CD4-positive, alpha-beta memory T cell (primary cell): ENCODE measurements at regions of chr16 and their contacts with region 1.

Region 1: DNA sequence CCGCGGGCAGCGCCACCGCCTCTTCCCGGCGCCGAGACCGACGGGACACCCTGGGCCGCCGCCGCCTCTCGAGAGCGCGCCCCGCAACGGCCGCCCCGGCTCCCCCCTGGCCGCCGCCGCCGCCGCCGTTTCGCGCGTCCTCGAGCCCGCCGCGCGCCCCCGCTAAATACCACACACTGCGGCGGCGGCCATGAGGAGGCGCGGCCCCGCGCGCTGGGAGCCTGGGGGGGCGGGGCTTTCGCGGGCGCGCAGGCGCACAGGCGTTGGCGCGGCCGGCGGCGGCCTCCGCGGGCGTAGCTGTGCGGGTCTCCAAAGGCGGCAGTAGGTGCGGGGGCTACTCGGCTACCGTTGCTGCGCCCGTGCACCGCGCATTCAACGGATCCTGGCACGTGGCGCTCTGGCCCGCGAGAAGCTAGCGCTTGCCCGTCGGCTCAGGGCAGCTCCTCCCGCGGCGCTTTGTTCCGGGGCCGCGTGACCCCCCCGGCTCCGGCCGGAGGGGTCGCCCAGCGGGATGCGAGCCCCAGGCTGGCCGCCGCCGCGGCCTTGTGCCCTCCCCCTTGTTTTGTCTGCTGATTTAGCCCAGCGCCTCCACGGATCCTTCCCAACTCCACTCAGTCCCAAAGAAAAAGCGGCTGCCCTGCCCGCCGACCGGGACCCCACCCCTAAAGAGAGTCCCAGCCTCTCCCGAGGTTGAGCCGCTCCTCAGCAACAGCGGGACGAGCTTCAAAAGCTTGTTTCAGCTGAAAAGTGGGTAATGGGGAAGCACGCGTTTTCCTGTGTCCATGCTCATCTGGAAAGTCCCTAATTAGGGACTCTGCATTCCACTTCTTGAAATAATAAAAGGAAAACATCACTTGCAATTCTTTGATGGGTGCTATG is at the start of gene SIAH1:
- DNase-seq: peak; percentile 76 to 91 (median 88)
- H3K4me3 ChIP-seq: peak within 1 kb of the TSS; percentile 63 to 81
- H3K4me3 Mint-ChIP-seq: peak within 1 kb of the TSS; percentile 89 to 97 (median 94)
- H3K27ac ChIP-seq: peak within 1 kb of the TSS; percentile 65
- H3K27ac Mint-ChIP-seq: peak within 1 kb of the TSS; percentile 90 to 97 (median 94)
- H3K4me1 ChIP-seq: peaks cover 29% of the 10 kb centered on the region
- H3K4me1 Mint-ChIP-seq: peaks cover 17 to 29% (median 20%) of the 10 kb centered on the region in 4 donors
- H3K27me3 ChIP-seq: no peaks in the 10 kb centered on the region
- H3K27me3 Mint-ChIP-seq: no peaks in the 10 kb centered on the region
- total RNA-seq, gene SIAH1: 11.9 to 14.9 TPM

Region 2: GRCh38 chr16:46830902-46831647 is 1554.4 kb before region 1 on chr16 and contains the start of gene C16orf87:
- CTCF ChIA-PET with region 1: no interaction called
- POLR2A ChIA-PET with region 1: no interaction called
- intact Hi-C with region 1: loop called (anchors 2 kb)
- DNase-seq: peak; percentile 92 to 95 (median 93)
- H3K4me3 ChIP-seq: peak within 1 kb of the TSS; percentile 74 to 84
- H3K4me3 Mint-ChIP-seq: peak within 1 kb of the TSS; percentile 92 to 100 (median 94)
- H3K27ac ChIP-seq: peak within 1 kb of the TSS; percentile 71
- H3K27ac Mint-ChIP-seq: peak within 1 kb of the TSS; percentile 89 to 99 (median 97)
- H3K4me1 ChIP-seq: peaks cover 41% of the 10 kb centered on the region
- H3K4me1 Mint-ChIP-seq: peaks cover 18 to 37% (median 25%) of the 10 kb centered on the region in 4 donors
- H3K27me3 ChIP-seq: no peaks in the 10 kb centered on the region
- H3K27me3 Mint-ChIP-seq: no peaks in the 10 kb centered on the region
- total RNA-seq, gene C16orf87: 5.8 to 6.2 TPM

Region 3: GRCh38 chr16:47460711-47461597 is 924.6 kb before region 1 on chr16 and contains the starts of genes ITFG1 and PHKB:
- CTCF ChIA-PET with region 1: no interaction called
- POLR2A ChIA-PET with region 1: no interaction called
- intact Hi-C with region 1: loop called (anchors 10 kb)
- DNase-seq: peak; percentile 95 to 98 (median 97)
- H3K4me3 ChIP-seq: peak within 1 kb of the TSS; percentile 74 to 92
- H3K4me3 Mint-ChIP-seq: peak within 1 kb of the TSS; percentile 92 to 99 (median 96)
- H3K27ac ChIP-seq: peak within 1 kb of the TSS; percentile 82
- H3K27ac Mint-ChIP-seq: peak within 1 kb of the TSS; percentile 87 to 99 (median 97)
- H3K4me1 ChIP-seq: peaks cover 56% of the 10 kb centered on the region
- H3K4me1 Mint-ChIP-seq: peaks cover 35 to 72% (median 60%) of the 10 kb centered on the region in 4 donors
- H3K27me3 ChIP-seq: no peaks in the 10 kb centered on the region
- H3K27me3 Mint-ChIP-seq: no peaks in the 10 kb centered on the region
- total RNA-seq, gene ITFG1: 26.1 to 27.7 TPM
- total RNA-seq, gene PHKB: 50.8 to 56.4 TPM

Region 4: GRCh38 chr16:48244080-48244862 is 141.2 kb before region 1 on chr16 and contains the start of gene LONP2:
- CTCF ChIA-PET with region 1: no interaction called
- POLR2A ChIA-PET with region 1: no interaction called
- intact Hi-C with region 1: loop called (anchors 1 kb)
- DNase-seq: peak; percentile 91 to 93 (median 92)
- H3K4me3 ChIP-seq: peak within 1 kb of the TSS; percentile 91 to 94
- H3K4me3 Mint-ChIP-seq: peak within 1 kb of the TSS; percentile 88 to 98 (median 94)
- H3K27ac ChIP-seq: peak within 1 kb of the TSS; percentile 70
- H3K27ac Mint-ChIP-seq: peak within 1 kb of the TSS; percentile 86 to 98 (median 95)
- H3K4me1 ChIP-seq: peaks cover 45% of the 10 kb centered on the region
- H3K4me1 Mint-ChIP-seq: peaks cover 28 to 52% (median 43%) of the 10 kb centered on the region in 4 donors
- H3K27me3 ChIP-seq: no peaks in the 10 kb centered on the region
- H3K27me3 Mint-ChIP-seq: no peaks in the 10 kb centered on the region
- total RNA-seq, gene LONP2: 96.2 to 101 TPM

Region 5: DNA sequence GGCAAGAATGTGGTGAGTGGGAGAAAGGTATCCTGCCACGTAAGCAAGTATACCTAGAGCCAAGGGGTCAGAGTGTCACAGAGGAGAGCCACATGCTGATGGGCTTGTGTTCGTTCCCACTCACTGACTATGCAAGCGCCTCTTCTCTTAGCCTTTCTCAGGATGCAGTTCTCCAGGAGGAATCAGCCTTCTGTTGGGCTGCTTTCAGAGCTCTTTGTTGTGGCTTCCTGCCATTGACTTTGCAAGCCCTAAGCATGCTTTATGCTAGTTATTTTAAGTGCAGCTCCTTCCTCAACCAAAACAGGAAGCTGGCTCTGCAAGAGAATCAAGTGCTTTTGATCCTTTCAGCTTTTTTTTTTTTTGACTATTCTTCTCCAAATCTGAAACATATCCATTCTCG is 66.9 kb before region 1 on chr16:
- CTCF ChIA-PET with region 1: no interaction called
- POLR2A ChIA-PET with region 1: interaction called, 4 read pairs
- intact Hi-C with region 1: loop called (anchors 5 kb)
- DNase-seq: peak; percentile 47 to 69 (median 61)
- H3K4me3 ChIP-seq: no peak overlapping the region
- H3K4me3 Mint-ChIP-seq: peak overlapping the region; percentile 56 to 87 (median 77)
- H3K27ac ChIP-seq: no peak overlapping the region
- H3K27ac Mint-ChIP-seq: peak overlapping the region; percentile 65 to 90 (median 85)
- H3K4me1 ChIP-seq: peaks cover 32% of the 10 kb centered on the region
- H3K4me1 Mint-ChIP-seq: peaks cover 19 to 48% (median 30%) of the 10 kb centered on the region in 4 donors
- H3K27me3 ChIP-seq: no peaks in the 10 kb centered on the region
- H3K27me3 Mint-ChIP-seq: no peaks in the 10 kb centered on the region

Region 6: DNA sequence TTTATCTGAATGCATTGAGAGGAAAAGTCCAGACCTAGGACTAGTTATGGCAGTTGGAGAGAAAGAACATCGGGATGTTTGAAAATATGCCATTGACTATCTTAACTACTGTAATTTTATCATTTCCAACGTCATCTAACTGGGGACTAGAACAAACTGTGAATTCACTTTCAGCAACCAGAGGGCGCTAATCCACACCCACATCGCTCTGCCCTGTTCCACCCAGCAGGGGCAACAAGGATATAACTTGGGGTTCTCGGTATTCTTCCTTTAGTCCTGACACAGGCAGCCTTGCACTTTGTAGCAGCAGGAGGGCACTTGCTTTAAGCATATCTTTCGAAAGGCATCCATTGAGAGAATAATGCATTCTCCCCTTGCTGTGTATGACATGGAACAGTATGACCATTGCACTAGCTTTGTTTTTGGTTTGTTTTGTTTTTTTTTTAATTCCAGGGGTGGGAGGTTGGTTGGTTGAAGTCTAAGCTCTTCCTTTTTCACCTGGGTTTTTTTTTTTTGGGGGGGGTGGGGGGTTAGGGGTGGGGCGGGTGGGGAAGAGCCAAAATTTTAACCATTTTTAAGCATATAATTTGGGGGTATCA is 31.8 kb before region 1 on chr16:
- CTCF ChIA-PET with region 1: interaction called, 5 read pairs
- POLR2A ChIA-PET with region 1: no interaction called
- intact Hi-C with region 1: loop called (anchors 1 kb)
- DNase-seq: peak; percentile 71 to 81 (median 73)
- H3K4me3 ChIP-seq: no peak overlapping the region
- H3K4me3 Mint-ChIP-seq: no peak overlapping the region
- H3K27ac ChIP-seq: no peak overlapping the region
- H3K27ac Mint-ChIP-seq: peak overlapping the region in 6 of 7 donors; percentile 1 to 86 (median 60)
- H3K4me1 ChIP-seq: peaks cover 3% of the 10 kb centered on the region
- H3K4me1 Mint-ChIP-seq: peaks cover 5 to 22% (median 7%) of the 10 kb centered on the region in 4 donors
- H3K27me3 ChIP-seq: no peaks in the 10 kb centered on the region
- H3K27me3 Mint-ChIP-seq: no peaks in the 10 kb centered on the region

Region 7: DNA sequence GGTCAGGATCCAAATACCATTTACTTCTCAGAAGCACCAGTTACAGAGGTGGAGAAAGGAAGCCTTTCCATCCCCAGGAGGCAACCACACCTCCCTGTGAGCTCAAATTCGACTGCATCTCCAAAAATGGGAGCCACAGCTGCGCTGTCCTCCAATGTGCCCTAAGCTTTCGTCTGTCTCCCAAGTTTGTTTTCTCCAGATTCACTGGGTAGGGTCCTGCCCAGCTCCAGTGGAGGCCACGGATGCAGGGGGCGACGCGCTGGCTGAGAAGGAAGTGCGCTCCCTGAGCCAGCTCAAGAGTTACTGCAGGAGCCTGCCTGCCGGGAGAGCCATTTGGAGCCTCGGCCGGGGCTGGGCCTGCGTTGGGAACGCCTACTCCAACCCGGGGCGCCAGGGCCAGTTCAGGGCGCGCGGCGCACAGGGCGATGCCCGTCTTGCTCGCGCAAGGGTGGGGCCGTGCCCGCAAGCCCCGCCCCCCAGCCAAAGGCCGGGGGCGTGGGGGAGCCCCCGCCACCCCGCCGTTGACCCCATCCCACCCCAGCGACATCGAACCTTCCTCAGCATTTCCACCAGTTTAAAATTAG is 19.8 kb before region 1 on chr16:
- CTCF ChIA-PET with region 1: interaction called, 4 read pairs
- POLR2A ChIA-PET with region 1: interaction called, 82 read pairs
- intact Hi-C with region 1: loop called (anchors 1 kb)
- DNase-seq: peak; percentile 73 to 78 (median 75)
- H3K4me3 ChIP-seq: peak overlapping the region; percentile 82 to 86
- H3K4me3 Mint-ChIP-seq: peak overlapping the region; percentile 85 to 97 (median 94)
- H3K27ac ChIP-seq: peak overlapping the region; percentile 76
- H3K27ac Mint-ChIP-seq: peak overlapping the region; percentile 88 to 99 (median 98)
- H3K4me1 ChIP-seq: peaks cover 22% of the 10 kb centered on the region
- H3K4me1 Mint-ChIP-seq: peaks cover 23 to 34% (median 31%) of the 10 kb centered on the region in 4 donors
- H3K27me3 ChIP-seq: no peaks in the 10 kb centered on the region
- H3K27me3 Mint-ChIP-seq: no peaks in the 10 kb centered on the region